ENCODE measurements at regions of chr1 and their contacts with region 1.

Region 1: DNA sequence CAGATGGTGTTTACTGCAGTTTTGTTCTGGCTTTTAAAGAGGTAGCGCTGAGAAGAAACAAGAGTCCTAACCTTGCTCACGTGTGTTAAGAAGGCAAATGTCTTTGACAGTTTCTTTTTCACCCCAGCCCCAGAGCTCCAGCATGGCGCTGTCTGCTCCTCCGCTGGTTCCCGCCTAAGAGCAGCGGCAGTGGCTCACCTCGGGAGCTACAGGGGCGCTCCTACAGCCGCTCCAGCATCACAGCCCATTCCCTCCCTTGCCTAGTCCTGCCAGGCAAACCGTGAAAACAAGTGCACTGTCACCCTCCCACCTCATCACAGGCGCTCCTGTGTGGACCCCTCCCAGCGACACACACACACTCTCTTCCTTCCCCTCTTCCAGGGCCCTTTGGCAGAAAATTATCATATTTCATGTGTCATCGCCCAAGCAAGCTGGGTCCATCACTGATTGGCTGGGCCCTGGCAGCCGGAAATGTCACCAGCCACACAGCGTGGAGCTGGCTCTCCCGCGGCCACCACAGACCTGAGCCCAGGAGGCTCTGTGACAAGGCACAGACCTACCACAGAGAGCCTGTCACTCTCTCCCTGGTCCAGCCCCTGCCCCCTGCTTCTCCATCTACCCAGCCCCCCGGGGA is 1.2 kb upstream of the HIVEP3 start:
- DNase-seq: peak; percentile 92
- ATAC-seq: peak; percentile 92
- H3K4me3 Mint-ChIP-seq: peak overlapping the region; percentile 72
- H3K27ac Mint-ChIP-seq: peak overlapping the region; percentile 88
- H3K4me1 Mint-ChIP-seq: peaks cover 57% of the 10 kb centered on the region
- H3K27me3 Mint-ChIP-seq: no peaks in the 10 kb centered on the region

Region 2: GRCh38 chr1:41739061-41739955 is 180.6 kb before region 1 on chr1:
- CTCF ChIA-PET with region 1: no interaction called
- POLR2A ChIA-PET with region 1: no interaction called
- intact Hi-C with region 1: loop called in 1 of 2 experiments (anchors 1 kb)
- DNase-seq: peak; percentile 95
- ATAC-seq: peak; percentile 50
- H3K4me3 Mint-ChIP-seq: peak overlapping the region; percentile 58
- H3K27ac Mint-ChIP-seq: peak overlapping the region; percentile 91
- H3K4me1 Mint-ChIP-seq: peaks cover 92% of the 10 kb centered on the region
- H3K27me3 Mint-ChIP-seq: no peaks in the 10 kb centered on the region

Region 3: GRCh38 chr1:41891199-41891896 is 28.5 kb before region 1 on chr1:
- CTCF ChIA-PET with region 1: interaction called, 11 read pairs
- POLR2A ChIA-PET with region 1: interaction called, 4 read pairs
- intact Hi-C with region 1: loop called in 1 of 2 experiments (anchors 2 kb)
- DNase-seq: peak; percentile 72
- ATAC-seq: peak; percentile 96
- H3K4me3 Mint-ChIP-seq: peak overlapping the region; percentile 78
- H3K27ac Mint-ChIP-seq: peak overlapping the region; percentile 95
- H3K4me1 Mint-ChIP-seq: peaks cover 50% of the 10 kb centered on the region
- H3K27me3 Mint-ChIP-seq: no peaks in the 10 kb centered on the region

Region 4: DNA sequence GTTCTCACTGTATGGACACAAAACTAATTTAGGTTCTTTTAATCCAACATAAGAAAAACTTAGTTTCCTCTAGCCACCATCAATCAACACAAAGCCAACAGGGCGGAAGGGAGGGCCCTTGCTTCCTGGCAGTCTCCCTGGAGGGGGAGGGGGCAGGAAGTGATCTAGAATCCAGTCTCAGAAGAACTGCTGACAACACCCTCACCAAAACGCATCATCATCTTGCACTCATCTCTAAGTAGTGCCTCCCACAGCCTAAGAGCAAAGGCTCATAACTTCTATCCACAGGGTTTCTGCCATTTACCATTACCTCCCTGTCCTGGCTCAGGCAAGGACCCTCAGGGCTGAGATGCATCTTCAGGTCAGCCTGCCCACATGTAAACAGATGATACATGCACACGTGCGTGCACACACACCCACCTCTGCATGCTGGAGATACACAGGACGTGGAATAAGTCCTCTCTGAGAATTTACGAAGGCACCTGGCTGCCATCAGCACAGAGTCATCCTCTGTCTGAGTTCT is 21.6 kb before region 1 on chr1:
- CTCF ChIA-PET with region 1: interaction called, 11 read pairs
- POLR2A ChIA-PET with region 1: no interaction called
- intact Hi-C with region 1: loop called in 1 of 2 experiments (anchors 1 kb)
- DNase-seq: peak; percentile 91
- ATAC-seq: peak; percentile 98
- H3K4me3 Mint-ChIP-seq: peak overlapping the region; percentile 66
- H3K27ac Mint-ChIP-seq: peak overlapping the region; percentile 97
- H3K4me1 Mint-ChIP-seq: peaks cover 72% of the 10 kb centered on the region
- H3K27me3 Mint-ChIP-seq: no peaks in the 10 kb centered on the region

Region 5: DNA sequence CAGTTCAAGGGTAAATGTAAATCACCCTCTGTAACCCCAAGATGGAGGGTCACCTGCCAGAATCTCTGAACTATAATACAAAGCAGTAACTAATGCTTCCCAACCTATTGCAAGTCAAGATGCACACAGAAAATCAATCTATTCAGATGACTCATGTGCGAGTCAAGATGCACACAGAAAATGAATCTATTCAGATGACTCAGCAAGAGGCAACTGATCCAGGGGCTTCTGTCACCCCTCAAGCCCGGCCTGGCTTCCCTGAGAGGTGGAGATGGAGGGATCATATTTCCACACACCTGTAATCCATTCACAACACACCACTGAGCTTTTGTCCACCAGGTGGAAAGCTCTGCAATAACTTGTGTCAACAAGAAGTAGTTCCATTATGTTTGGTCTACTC is 16.2 kb after region 1 on chr1:
- CTCF ChIA-PET with region 1: interaction called, 5 read pairs
- POLR2A ChIA-PET with region 1: no interaction called
- intact Hi-C with region 1: loop called (anchors 1 to 2 kb)
- DNase-seq: peak; percentile 52
- ATAC-seq: peak; percentile 96
- H3K4me3 Mint-ChIP-seq: no peak overlapping the region
- H3K27ac Mint-ChIP-seq: no peak overlapping the region
- H3K4me1 Mint-ChIP-seq: peaks cover 35% of the 10 kb centered on the region
- H3K27me3 Mint-ChIP-seq: no peaks in the 10 kb centered on the region

Region 6: GRCh38 chr1:41950820-41951219 is 30.9 kb after region 1 on chr1:
- CTCF ChIA-PET with region 1: interaction called, 4 read pairs
- POLR2A ChIA-PET with region 1: no interaction called
- intact Hi-C with region 1: loop called in 1 of 2 experiments (anchors 2 kb)
- DNase-seq: peak; percentile 35
- ATAC-seq: peak; percentile 79
- H3K4me3 Mint-ChIP-seq: no peak overlapping the region
- H3K27ac Mint-ChIP-seq: peak overlapping the region; percentile 73
- H3K4me1 Mint-ChIP-seq: peaks cover 34% of the 10 kb centered on the region
- H3K27me3 Mint-ChIP-seq: no peaks in the 10 kb centered on the region

Region 7: GRCh38 chr1:42541104-42541503 is 621.2 kb after region 1 on chr1:
- CTCF ChIA-PET with region 1: no interaction called
- POLR2A ChIA-PET with region 1: no interaction called
- intact Hi-C with region 1: no loop called
- DNase-seq: no peak
- ATAC-seq: no peak
- H3K4me3 Mint-ChIP-seq: no peak overlapping the region
- H3K27ac Mint-ChIP-seq: no peak overlapping the region
- H3K4me1 Mint-ChIP-seq: no peaks in the 10 kb centered on the region
- H3K27me3 Mint-ChIP-seq: no peaks in the 10 kb centered on the region